ENCODE measurements at regions of chr22 and their contacts with region 1.

Region 1: DNA sequence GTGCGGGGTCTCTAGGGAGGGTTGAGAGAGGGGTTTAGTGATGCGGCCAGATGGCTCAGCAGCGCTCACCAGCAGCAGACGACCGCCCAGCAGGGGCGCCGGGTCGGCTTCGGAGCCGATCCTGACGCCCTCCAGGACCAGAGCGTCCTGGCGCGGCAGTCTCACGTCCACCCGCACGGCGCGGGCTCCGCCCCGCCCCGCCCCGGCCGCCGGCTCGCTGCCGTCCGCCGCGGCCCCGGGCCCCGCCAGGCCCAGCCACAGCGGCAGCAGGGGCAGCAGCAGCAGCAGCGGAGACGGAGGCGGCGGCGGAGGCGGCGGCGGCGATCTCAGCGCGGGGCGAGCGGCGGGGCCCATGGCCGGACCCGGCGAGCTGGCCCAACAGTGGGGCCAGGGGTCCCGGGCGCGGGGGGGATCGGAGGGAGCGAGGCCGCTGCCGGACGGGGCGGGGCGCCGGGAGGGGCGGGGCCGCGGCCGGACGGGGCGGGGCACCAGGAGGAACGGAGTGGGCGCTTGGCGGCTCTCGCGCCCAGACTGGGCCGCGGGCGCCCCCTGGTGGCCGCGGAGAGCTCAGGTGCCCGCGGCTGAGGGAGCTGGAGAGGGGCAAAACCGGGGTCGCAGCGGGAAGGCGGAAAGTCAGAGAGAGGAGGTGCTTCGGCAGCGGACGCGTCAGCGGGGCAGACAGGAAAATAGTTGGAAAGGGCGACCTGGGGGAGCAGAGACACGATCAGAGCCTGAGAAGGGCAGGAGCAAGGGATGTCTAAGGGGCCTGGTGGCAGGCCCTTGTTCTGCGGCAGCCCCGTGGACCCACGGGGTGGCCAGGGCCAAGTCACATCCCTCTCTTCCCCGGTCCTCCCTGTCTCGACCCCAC is at the start of gene RNF215:
- DNase-seq: peak; percentile 94
- total RNA-seq, gene RNF215: 10.5 TPM

Region 2: GRCh38 chr22:30104501-30105156 is 282.6 kb before region 1 on chr22:
- intact Hi-C with region 1: loop called (anchors 5 kb)
- DNase-seq: no peak

Region 3: DNA sequence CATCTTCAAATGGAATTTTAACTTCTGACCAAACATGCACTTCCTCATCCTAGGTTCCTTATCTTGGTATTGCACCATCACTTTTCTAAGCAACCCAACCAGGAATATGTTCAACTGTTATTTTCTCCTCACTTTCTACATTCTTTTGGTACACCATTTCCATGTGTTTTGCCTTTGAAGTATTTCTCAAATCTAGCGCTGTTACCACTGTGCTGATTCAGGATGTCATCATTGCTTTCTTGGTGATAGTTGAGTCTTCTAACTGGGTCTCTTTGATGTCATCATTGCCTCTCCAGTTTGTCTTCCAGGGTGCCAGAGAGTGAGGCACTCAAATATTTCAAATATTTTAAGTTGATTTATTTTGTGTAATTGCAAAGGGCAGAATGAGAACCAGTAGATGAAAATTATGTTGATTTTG is 259.4 kb before region 1 on chr22:
- intact Hi-C with region 1: no loop called
- DNase-seq: no peak

Region 4: GRCh38 chr22:30262917-30263741 is 124.1 kb before region 1 on chr22:
- intact Hi-C with region 1: loop called (anchors 2 kb)
- DNase-seq: peak; percentile 90

Region 5: DNA sequence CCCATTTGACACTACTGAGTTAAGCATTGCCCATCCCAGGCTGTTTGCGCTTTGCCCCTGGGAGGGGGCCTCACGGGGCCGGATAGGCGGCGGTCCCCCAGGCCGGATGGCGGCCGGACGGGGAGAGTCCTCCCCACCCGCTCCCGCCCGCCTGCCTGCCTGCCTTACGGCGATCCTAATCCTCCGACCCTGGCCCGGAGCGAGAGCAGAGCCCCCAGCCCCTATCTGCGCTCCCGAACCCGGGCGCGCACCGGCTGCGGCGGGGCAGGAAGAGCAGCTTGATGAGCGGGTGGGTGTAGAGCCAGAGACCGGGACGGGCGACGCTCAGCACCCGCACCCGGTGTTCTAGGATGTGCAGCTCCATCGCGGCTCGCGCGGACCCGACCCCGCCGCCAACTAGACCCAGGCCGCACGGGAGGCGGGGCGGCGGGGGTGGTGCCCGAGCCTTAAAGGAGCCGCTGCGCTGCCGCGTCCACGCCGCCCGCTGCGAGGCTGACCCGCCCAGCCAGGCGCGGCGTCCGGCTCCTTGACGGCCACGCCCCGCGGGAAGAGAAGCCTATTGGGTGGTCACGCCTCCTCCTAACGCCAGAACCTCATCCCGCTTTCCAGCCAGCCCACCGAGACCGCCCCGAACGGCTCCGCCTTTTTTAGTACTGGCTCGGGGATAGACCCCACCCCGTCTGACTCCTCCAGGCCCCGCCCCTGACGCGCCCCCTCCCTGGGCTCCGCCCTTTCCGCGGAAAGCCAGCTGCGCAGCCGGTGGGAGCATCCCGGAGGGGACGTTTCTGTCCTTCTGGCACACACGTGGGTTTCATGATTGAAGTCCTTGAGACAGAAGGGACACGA is 97.8 kb before region 1 on chr22 and contains the start of gene CASTOR1:
- intact Hi-C with region 1: loop called (anchors 1 kb)
- DNase-seq: peak; percentile 99
- total RNA-seq, gene CASTOR1: 5.0 TPM

Region 6: GRCh38 chr22:30326706-30327362 is 60.4 kb before region 1 on chr22 and contains the start of gene TBC1D10A:
- intact Hi-C with region 1: loop called (anchors 5 kb)
- DNase-seq: peak; percentile 95
- total RNA-seq, gene TBC1D10A: 5.7 TPM

Region 7: DNA sequence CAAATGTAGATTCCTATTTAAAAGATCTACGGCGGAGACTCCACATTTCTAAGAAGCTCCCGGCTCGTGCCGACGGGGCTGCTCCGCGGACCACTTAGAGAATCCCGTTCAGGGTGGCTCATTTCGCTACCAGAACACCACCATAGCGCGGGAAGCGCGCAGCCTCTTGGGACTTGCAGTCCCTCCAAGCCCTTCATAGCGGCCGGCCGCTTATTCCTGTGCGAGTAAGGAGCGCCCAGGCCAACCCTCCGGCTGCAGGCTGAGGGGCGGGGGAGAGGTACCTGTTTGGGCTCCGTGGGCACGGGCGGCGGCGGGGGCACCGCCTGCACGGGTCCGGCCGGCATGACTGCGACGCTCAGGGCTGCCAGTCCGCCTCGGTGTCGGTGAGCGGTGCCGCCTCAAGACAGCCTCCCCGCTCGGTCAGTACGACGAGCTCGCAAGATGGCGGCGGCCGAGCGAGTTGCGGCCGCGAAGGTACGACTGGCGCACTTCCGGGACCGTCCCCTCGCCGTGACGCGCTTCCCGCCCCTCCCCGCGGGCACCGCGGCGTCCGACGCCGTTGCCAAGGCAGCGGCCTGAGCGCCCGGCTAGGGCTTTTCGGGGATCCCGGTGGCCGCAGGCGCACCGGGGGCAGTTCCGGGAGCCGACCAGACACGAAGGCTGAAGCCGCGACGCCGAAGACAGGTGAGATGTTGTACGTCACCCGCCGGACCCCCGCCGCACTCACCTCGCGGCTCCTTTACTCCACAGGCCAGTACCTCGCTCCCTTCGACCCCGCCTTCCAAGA is 30.6 kb before region 1 on chr22 and contains the starts of genes CCDC157 and SF3A1:
- intact Hi-C with region 1: loop called (anchors 1 kb)
- DNase-seq: peak; percentile 95
- total RNA-seq, gene CCDC157: 0.78 TPM
- total RNA-seq, gene SF3A1: 106 TPM

Region 8: DNA sequence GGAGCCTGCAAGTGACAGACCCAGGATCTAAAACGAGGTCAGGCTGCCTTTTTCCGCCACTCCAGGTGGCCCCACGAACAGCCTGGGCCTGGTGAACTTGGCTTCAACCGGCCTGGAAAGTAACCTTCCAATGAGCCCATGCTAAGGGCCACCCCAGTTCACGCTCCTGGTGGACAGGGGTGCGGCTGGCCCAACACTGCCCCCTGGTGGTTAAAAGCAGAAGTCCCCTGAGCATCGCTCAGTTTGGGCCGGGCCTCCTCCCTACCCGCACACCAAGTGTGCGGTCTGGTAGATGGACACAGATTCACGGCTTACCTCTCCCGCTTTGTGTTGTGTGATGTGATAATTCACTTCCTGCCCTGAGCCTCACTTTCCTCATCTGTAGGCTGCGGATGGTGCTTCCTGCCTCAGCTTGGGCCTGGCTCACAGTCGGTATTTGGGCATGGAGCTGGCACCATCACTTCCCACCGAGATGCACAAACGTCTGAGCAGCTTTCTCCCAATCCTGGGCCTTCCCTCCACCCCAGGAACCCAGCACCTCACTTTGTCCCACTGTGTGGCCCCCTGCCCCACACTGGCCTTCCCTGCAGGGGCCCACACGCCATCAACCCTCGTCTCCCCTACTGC is 98.3 kb after region 1 on chr22:
- intact Hi-C with region 1: loop called (anchors 5 kb)
- DNase-seq: peak; percentile 83

Measured in cardiac septum (tissue), 1 donor.